ENCODE measurements at regions of chrX and their contacts with region 1.

Region 1: GRCh38 chrX:129637217-129638109 is 17.3 kb downstream of the APLN start:
- DNase-seq: peak; percentile 51 to 82 (median 82)
- ATAC-seq: peak; percentile 62 to 66
- H3K4me3 ChIP-seq: no peak overlapping the region
- H3K27ac ChIP-seq: no peak overlapping the region
- H3K4me1 ChIP-seq: no peaks in the 10 kb centered on the region
- H3K27me3 ChIP-seq: no peaks in the 10 kb centered on the region

Region 2: DNA sequence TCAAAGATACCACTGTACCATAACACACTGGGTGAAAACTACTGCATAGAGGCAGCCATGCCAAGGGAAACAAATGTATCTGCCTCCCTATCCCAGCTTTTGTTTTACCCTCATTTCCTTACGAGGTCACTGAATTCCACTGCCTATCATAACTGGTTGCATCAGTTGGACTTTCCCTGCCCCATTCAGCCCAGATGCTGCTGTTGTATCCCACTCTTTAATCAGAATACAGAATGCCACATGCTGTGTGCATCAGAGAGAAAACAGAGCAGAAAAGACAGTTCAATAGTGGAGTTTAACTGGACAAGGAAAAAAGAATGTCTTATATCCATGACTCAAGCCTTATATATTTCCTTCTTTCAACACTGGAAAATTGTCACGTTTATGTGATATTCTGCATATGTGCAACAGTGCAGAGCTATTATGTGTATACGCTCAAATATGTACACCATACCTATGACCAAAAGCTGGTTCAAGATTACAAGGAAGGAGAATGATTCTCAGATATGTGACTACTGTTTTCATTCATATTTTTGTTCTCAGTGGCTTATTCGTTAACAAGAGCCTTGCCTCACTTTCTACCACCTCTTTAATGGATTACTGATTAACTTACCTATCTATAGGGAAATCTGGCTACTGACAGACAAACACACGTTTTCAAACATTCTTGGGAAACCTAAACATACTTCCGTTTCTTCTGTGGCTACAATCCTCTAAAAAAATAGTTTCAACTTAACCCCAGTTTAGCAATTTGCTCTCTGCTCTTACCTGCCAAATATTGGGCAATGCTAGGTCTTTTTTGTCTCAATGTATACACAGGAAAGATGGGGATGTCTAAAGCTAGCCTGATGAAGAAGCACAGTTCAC is 493.1 kb before region 1 on chrX:
- intact Hi-C with region 1: no loop called
- DNase-seq: no peak
- ATAC-seq: no peak
- H3K4me3 ChIP-seq: no peak overlapping the region
- H3K27ac ChIP-seq: no peak overlapping the region
- H3K4me1 ChIP-seq: no peaks in the 10 kb centered on the region
- H3K27me3 ChIP-seq: no peaks in the 10 kb centered on the region

Region 3: GRCh38 chrX:129726307-129727111 is 89.0 kb after region 1 on chrX:
- intact Hi-C with region 1: loop called (anchors 2 to 10 kb)
- DNase-seq: peak; percentile 58 to 79 (median 72)
- ATAC-seq: peak; percentile 75 to 83
- H3K4me3 ChIP-seq: no peak overlapping the region
- H3K27ac ChIP-seq: no peak overlapping the region
- H3K4me1 ChIP-seq: no peaks in the 10 kb centered on the region
- H3K27me3 ChIP-seq: no peaks in the 10 kb centered on the region

Region 4: DNA sequence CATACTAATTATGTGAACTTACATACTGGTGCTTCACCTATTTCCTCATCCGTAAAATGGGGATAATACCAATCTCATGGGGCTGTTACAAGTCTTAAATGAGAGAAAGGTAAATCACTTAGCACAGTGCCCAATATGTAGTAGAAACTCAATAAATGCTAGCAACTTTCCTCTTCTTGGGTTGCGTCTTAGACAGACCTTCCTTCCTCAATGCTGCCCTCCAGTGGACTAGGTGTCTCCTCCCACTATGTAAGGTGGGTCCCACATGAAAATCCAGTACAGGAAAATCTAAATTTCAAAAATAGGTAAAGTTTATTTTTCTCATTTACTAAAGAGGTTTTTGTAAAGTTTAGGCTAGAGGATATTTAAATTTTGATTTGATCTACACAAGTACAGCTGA is 185.7 kb after region 1 on chrX:
- intact Hi-C with region 1: loop called in 1 of 4 experiments (anchors 10 kb)
- DNase-seq: peak in 1 of 3 donors; percentile 19
- ATAC-seq: peak in 1 of 2 donors; percentile 58
- H3K4me3 ChIP-seq: no peak overlapping the region
- H3K27ac ChIP-seq: no peak overlapping the region
- H3K4me1 ChIP-seq: no peaks in the 10 kb centered on the region
- H3K27me3 ChIP-seq: no peaks in the 10 kb centered on the region

Measured in right cardiac atrium (tissue), 5 donors.